Activated B cell treated with CpG ODN at 0.5 μM for 24 hours (primary cell): ENCODE measurements at regions of chr20 and their contacts with region 1.

Region 1: GRCh38 chr20:41095110-41095969 is 42.0 kb upstream of the PLCG1 start:
- DNase-seq: peak; percentile 26
- ATAC-seq: peak; percentile 69
- H3K4me3 Mint-ChIP-seq: no peak overlapping the region
- H3K27ac Mint-ChIP-seq: no peak overlapping the region
- H3K4me1 Mint-ChIP-seq: no peaks in the 10 kb centered on the region
- H3K27me3 Mint-ChIP-seq: no peaks in the 10 kb centered on the region
- CTCF ChIP-seq: peak; percentile 84

Region 2: GRCh38 chr20:40414843-40415615 is 680.3 kb before region 1 on chr20:
- CTCF ChIA-PET with region 1: no interaction called
- POLR2A ChIA-PET with region 1: no interaction called
- intact Hi-C with region 1: no loop called
- DNase-seq: no peak
- ATAC-seq: no peak
- H3K4me3 Mint-ChIP-seq: no peak overlapping the region
- H3K27ac Mint-ChIP-seq: no peak overlapping the region
- H3K4me1 Mint-ChIP-seq: no peaks in the 10 kb centered on the region
- H3K27me3 Mint-ChIP-seq: no peaks in the 10 kb centered on the region
- CTCF ChIP-seq: no peak

Region 3: DNA sequence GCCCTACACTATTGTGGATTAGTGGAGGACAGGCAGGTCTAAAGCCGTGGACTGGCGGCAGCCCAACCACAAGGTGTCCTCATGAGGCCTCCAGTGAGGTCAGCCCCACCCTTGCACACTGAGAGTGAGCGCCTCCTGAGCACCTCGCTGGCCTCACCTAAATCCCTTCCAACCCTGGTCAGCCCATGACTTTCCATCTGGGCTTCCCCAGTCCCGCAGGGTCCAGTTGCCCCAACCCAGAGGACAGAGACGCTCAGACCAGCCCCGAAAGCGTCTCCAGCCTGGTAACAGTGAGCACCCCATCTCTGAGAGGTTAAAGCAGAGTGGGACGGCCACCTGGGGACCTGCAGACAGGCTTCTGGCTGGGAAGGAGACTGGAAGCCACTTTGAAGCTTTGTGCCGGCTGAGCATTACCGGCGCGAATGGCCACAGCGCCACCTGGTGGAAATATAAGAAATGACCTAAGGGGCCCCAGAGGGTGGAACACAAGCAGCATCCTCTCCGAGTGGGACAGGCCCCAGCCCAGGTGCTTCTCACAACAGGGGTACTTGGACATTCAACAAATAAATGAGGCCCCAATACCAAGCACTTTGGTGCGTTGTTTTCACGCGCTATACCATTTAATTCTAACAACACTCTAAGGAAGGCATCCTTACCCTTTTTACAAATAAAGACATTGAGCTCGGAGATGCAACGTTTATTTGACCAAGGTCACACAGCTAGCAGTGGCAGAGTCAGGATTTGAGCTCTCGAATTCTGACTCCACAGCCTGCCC is 132.4 kb before region 1 on chr20:
- CTCF ChIA-PET with region 1: interaction called, 94 read pairs
- POLR2A ChIA-PET with region 1: no interaction called
- intact Hi-C with region 1: loop called (anchors 1 kb)
- DNase-seq: peak; percentile 61
- ATAC-seq: peak; percentile 81
- H3K4me3 Mint-ChIP-seq: no peak overlapping the region
- H3K27ac Mint-ChIP-seq: no peak overlapping the region
- H3K4me1 Mint-ChIP-seq: peaks cover 5% of the 10 kb centered on the region
- H3K27me3 Mint-ChIP-seq: peaks cover 5% of the 10 kb centered on the region
- CTCF ChIP-seq: peak; percentile 52

Region 4: DNA sequence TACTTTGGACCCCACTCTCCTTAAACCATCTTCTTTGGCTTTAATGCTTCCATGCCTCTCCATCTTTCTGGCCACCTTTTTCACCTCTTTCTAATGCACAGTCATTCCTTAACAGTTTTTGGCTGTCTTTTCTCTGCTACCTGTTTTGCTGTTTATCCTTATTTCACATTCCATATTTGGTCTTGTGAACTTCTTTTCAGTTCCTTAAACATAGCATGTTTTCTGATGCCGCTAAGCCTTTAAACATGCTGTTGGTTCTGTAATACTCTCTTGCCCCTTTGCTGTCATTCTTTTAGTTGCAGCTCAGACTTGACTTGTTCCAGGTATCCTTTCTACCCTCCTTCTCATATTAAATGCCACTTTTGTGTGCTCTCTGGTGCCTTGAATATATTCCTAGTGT is 31.0 kb before region 1 on chr20:
- CTCF ChIA-PET with region 1: interaction called, 10 read pairs
- POLR2A ChIA-PET with region 1: interaction called, 3 read pairs
- intact Hi-C with region 1: loop called (anchors 1 kb)
- DNase-seq: no peak
- ATAC-seq: peak; percentile 62
- H3K4me3 Mint-ChIP-seq: peak overlapping the region; percentile 33
- H3K27ac Mint-ChIP-seq: no peak overlapping the region
- H3K4me1 Mint-ChIP-seq: peaks cover 52% of the 10 kb centered on the region
- H3K27me3 Mint-ChIP-seq: no peaks in the 10 kb centered on the region
- CTCF ChIP-seq: no peak

Region 5: GRCh38 chr20:41078329-41078728 is 17.0 kb before region 1 on chr20:
- CTCF ChIA-PET with region 1: interaction called, 12 read pairs
- POLR2A ChIA-PET with region 1: interaction called, 3 read pairs
- intact Hi-C with region 1: no loop called
- DNase-seq: no peak
- ATAC-seq: peak; percentile 68
- H3K4me3 Mint-ChIP-seq: no peak overlapping the region
- H3K27ac Mint-ChIP-seq: no peak overlapping the region
- H3K4me1 Mint-ChIP-seq: peaks cover 34% of the 10 kb centered on the region
- H3K27me3 Mint-ChIP-seq: no peaks in the 10 kb centered on the region
- CTCF ChIP-seq: no peak

Region 6: GRCh38 chr20:41436679-41437078 is 341.3 kb after region 1 on chr20:
- CTCF ChIA-PET with region 1: no interaction called
- POLR2A ChIA-PET with region 1: no interaction called
- intact Hi-C with region 1: no loop called
- DNase-seq: no peak
- ATAC-seq: no peak
- H3K4me3 Mint-ChIP-seq: no peak overlapping the region
- H3K27ac Mint-ChIP-seq: no peak overlapping the region
- H3K4me1 Mint-ChIP-seq: no peaks in the 10 kb centered on the region
- H3K27me3 Mint-ChIP-seq: no peaks in the 10 kb centered on the region
- CTCF ChIP-seq: no peak